ENCODE measurements at regions of chr11 and their contacts with region 1.

Region 1: GRCh38 chr11:65418711-65419459 is 3.7 kb upstream of the NEAT1 start:
- DNase-seq: peak; percentile 98
- H3K4me3 Mint-ChIP-seq: peak overlapping the region; percentile 63
- H3K27ac Mint-ChIP-seq: peak overlapping the region; percentile 99
- H3K4me1 Mint-ChIP-seq: peaks cover 34% of the 10 kb centered on the region
- H3K27me3 Mint-ChIP-seq: peaks cover 10% of the 10 kb centered on the region
- CTCF ChIP-seq: no peak

Region 2: DNA sequence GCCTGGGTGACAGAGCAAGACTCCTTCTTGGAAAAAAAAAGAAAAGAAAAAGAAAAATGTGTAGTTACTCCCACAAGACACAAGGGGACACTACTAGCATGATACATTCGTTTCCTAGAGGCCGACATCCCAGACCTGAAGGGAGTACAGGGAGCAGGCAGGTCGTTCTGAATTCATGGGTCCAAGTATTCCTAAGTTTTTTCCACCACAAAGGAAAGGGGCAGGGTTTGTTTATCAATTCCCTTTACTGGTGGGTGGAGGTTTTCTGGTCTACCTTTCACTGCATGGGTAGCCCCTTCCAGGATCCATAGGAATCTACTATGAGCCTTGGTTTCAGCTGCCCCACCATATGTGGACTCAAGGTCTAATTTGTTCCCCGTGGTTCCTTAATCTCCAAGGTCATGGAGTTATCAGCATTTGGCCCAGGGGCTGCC is 52.5 kb before region 1 on chr11:
- CTCF ChIA-PET with region 1: interaction called, 5 read pairs
- POLR2A ChIA-PET with region 1: interaction called, 18 read pairs
- intact Hi-C with region 1: no loop called
- DNase-seq: peak; percentile 87
- H3K4me3 Mint-ChIP-seq: no peak overlapping the region
- H3K27ac Mint-ChIP-seq: no peak overlapping the region
- H3K4me1 Mint-ChIP-seq: peaks cover 9% of the 10 kb centered on the region
- H3K27me3 Mint-ChIP-seq: no peaks in the 10 kb centered on the region
- CTCF ChIP-seq: peak; percentile 72

Region 3: GRCh38 chr11:65403607-65404121 is 15.2 kb before region 1 on chr11:
- CTCF ChIA-PET with region 1: interaction called, 27 read pairs
- POLR2A ChIA-PET with region 1: interaction called, 11 read pairs
- intact Hi-C with region 1: no loop called
- DNase-seq: no peak
- H3K4me3 Mint-ChIP-seq: no peak overlapping the region
- H3K27ac Mint-ChIP-seq: no peak overlapping the region
- H3K4me1 Mint-ChIP-seq: no peaks in the 10 kb centered on the region
- H3K27me3 Mint-ChIP-seq: no peaks in the 10 kb centered on the region
- CTCF ChIP-seq: no peak

Region 4: GRCh38 chr11:65440831-65441499 is 22.1 kb after region 1 on chr11:
- CTCF ChIA-PET with region 1: interaction called, 3 read pairs
- POLR2A ChIA-PET with region 1: interaction called, 391 read pairs
- intact Hi-C with region 1: no loop called
- DNase-seq: peak; percentile 40
- H3K4me3 Mint-ChIP-seq: peak overlapping the region; percentile 41
- H3K27ac Mint-ChIP-seq: peak overlapping the region; percentile 93
- H3K4me1 Mint-ChIP-seq: peaks cover 72% of the 10 kb centered on the region
- H3K27me3 Mint-ChIP-seq: no peaks in the 10 kb centered on the region
- CTCF ChIP-seq: no peak

Region 5: DNA sequence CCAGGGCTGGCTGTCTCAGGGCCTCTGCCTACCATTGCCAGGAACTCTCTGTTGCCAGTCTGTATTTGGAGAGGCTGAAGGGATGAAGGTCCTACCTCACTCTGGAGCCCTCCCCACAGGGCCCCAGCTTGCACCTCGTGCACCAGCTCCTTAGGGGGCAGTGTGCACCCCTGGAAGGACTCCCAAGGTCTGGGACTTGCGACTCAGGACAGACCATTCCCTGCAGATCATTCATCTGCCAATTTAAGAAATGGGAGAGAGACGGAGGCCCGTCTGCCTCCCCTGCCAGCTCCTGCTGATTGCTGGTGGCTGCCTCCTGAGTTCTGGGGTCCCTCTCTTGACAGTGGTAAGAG is 52.5 kb after region 1 on chr11:
- CTCF ChIA-PET with region 1: interaction called, 5 read pairs
- POLR2A ChIA-PET with region 1: interaction called, 373 read pairs
- intact Hi-C with region 1: loop called (anchors 1 kb)
- DNase-seq: peak; percentile 85
- H3K4me3 Mint-ChIP-seq: no peak overlapping the region
- H3K27ac Mint-ChIP-seq: peak overlapping the region; percentile 97
- H3K4me1 Mint-ChIP-seq: peaks cover 15% of the 10 kb centered on the region
- H3K27me3 Mint-ChIP-seq: no peaks in the 10 kb centered on the region
- CTCF ChIP-seq: peak; percentile 25

Region 6: DNA sequence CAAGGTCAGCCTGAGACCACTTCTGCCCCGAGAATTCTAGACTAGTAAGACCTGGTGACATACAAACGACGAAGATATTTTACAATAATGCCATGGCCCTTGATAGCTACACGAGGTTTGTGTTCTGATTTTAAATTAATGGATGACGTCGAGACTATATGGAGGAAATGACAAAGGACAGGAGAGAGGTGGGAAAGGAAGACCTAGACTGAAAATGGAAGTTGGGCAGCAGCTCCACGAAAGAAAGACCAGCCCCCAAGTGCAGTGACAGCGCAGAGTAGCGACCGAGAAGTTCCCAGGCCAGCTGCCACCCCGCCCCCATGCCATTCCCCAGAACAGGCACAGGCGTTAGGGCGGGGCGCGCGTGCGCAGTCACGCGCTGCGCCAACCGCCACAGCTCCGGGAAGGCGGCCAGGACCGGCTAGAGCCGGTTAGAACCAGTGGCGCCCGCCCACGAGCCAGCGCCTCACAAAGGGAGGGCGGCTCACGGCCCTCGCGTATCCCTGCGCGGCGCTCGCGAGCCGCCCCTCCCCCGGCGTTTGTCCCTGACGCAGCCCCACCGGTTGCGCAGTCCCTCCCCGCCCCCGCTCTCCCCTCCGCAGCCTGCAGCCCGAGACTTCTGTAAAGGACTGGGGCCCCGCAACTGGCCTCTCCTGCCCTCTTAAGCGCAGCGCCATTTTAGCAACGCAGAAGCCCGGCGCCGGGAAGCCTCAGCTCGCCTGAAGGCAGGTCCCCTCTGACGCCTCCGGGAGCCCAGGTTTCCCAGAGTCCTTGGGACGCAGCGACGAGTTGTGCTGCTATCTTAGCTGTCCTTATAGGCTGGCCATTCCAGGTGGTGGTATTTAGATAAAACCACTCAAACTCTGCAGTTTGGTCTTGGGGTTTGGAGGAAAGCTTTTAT is 78.5 kb after region 1 on chr11:
- CTCF ChIA-PET with region 1: interaction called, 7 read pairs
- POLR2A ChIA-PET with region 1: interaction called, 2,994 read pairs
- intact Hi-C with region 1: loop called (anchors 1 kb)
- DNase-seq: peak; percentile 98
- H3K4me3 Mint-ChIP-seq: no peak overlapping the region
- H3K27ac Mint-ChIP-seq: no peak overlapping the region
- H3K4me1 Mint-ChIP-seq: peaks cover 17% of the 10 kb centered on the region
- H3K27me3 Mint-ChIP-seq: no peaks in the 10 kb centered on the region
- CTCF ChIP-seq: no peak

Region 7: GRCh38 chr11:65540297-65541092 is 121.6 kb after region 1 on chr11:
- CTCF ChIA-PET with region 1: interaction called, 5 read pairs
- POLR2A ChIA-PET with region 1: interaction called, 14 read pairs
- intact Hi-C with region 1: no loop called
- DNase-seq: peak; percentile 87
- H3K4me3 Mint-ChIP-seq: peak overlapping the region; percentile 79
- H3K27ac Mint-ChIP-seq: peak overlapping the region; percentile 23
- H3K4me1 Mint-ChIP-seq: peaks cover 6% of the 10 kb centered on the region
- H3K27me3 Mint-ChIP-seq: no peaks in the 10 kb centered on the region
- CTCF ChIP-seq: peak; percentile 92

Measured in MCF 10A (cell line).